Transverse colon (tissue), 4 donors: ENCODE measurements at regions of chr14 and their contacts with region 1.

Region 1: GRCh38 chr14:95011445-95012006 is 145.8 kb downstream of the DICER1 start:
- DNase-seq: no peak
- H3K4me3 ChIP-seq: no peak overlapping the region
- H3K27ac ChIP-seq: peak overlapping the region; percentile 19 to 81 (median 72)
- H3K4me1 ChIP-seq: peaks cover 0 to 15% (median 1%) of the 10 kb centered on the region in 4 donors
- H3K27me3 ChIP-seq: no peaks in the 10 kb centered on the region
- CTCF ChIP-seq: no peak
- EP300 ChIP-seq: no peak
- POLR2A ChIP-seq: no peak

Region 2: DNA sequence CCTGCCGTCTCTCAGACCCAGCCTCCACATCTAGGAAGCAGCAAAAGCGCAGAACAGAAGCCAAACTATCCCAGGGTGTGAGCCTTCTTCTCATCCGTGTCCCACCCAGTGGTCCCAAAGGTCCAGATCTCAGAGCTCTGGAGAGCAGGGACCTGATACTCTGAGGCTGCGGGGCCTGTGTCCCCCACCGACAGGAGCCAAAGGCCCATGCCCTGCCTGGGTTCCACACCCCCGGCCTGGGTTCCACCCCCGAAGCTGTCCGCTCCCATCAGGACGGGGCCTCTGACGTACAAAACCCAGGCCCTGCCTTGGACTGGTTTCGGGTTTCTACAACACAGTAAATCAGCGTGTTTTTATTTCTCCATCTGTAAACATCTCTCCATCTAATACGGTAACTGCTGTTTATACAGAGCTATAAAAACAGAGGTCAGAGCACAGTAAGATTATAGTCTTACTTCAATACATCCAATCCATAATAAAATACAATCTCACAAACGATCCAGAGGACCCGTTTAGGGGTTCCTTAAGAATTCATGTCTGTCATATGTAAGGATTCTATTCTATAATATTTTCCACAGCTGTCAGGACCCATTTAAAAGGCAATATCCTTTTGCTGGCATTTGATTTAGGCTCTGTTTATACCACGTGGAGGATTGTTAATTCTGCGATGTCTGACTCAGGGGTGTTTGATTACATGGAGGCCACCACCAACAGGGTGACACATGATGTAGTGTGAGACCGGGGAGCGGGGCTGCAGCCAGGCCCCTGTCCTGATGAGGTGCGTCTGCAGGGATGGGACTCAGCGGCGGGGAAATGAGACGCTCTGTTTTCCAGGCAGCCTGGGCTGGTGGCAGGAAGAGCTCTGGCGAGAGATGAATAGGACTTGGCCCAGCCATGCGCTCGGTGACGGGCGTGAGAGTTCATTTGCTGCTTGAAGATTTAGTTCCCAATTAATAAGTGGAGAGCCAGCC is 35.5 kb after region 1 on chr14:
- in situ Hi-C with region 1: no loop called
- intact Hi-C with region 1: loop called (anchors 2 kb)
- DNase-seq: peak; percentile 54
- H3K4me3 ChIP-seq: no peak overlapping the region
- H3K27ac ChIP-seq: peak overlapping the region; percentile 59 to 79 (median 78)
- H3K4me1 ChIP-seq: peaks cover 3 to 13% (median 4%) of the 10 kb centered on the region in 4 donors
- H3K27me3 ChIP-seq: no peaks in the 10 kb centered on the region
- CTCF ChIP-seq: no peak
- EP300 ChIP-seq: peak; percentile 88
- POLR2A ChIP-seq: no peak

Region 3: DNA sequence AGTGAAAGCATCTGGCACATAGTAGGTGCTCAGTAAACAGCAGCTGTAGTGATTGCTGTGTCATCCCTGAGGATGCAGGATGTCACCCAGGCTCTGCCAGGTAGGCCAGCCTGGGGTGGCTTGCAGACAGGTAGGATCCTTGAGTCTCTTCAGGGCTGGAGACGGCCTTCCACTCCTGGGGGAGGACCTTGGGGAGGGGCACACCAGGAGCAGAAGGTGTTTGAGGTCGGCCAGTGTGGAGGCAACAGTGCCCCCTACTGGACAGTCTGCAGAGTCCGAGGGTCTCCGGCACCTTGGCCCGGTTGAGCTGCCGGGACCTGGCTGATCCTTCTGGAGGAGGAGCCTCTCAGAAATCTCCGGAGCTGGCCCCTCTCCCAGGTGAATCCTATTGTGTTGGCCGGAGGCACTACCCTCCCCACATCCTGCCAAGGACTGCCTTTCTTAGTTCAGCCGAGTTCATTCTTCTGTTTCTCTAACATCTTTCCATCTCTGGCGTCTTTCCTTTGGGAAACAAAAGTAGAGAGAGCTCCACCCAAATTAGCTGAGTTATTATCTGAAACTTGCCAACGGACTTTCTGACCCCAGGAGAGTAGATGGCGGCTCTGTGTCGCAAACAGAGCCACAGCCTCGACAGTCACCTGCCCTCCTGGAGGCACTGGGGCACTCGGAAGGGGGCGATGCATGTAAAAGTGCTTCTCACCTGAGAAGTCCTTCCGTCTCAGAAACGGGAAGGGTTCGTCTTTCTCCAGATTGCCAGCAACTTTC is 350.0 kb after region 1 on chr14:
- in situ Hi-C with region 1: no loop called
- intact Hi-C with region 1: no loop called
- DNase-seq: peak; percentile 75
- H3K4me3 ChIP-seq: no peak overlapping the region
- H3K27ac ChIP-seq: no peak overlapping the region
- H3K4me1 ChIP-seq: no peaks in the 10 kb centered on the region
- H3K27me3 ChIP-seq: no peaks in the 10 kb centered on the region
- CTCF ChIP-seq: peak; percentile 67 to 78 (median 67)
- EP300 ChIP-seq: no peak
- POLR2A ChIP-seq: no peak